ENCODE measurements at regions of chr1 and their contacts with region 1.

Region 1: DNA sequence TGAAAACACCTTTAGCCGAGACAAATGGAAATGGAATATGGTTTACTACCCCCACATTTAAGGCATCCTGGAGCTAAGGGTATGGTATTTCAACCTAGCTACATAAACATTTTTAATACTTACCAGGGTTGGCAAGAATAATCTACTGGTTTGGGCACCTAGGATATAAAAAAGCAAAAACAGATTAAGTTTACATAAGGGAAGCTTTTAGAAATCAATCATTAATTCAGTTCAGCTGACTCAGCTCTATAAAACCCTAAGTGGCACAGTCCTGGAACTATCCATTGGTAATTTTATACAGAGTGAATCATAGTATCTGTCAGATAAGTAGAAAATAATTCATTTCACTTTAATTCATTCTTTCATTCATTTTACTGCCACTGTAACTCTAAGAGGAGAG is 355.2 kb downstream of the VAV3 start:
- DNase-seq: no peak
- H3K4me3 ChIP-seq: no peak overlapping the region
- H3K27ac ChIP-seq: no peak overlapping the region
- H3K4me1 ChIP-seq: peaks cover 4% of the 10 kb centered on the region
- CTCF ChIP-seq: no peak

Region 2: GRCh38 chr1:107100331-107100984 is 509.4 kb before region 1 on chr1:
- CTCF ChIA-PET with region 1: no interaction called
- POLR2A ChIA-PET with region 1: no interaction called
- intact Hi-C with region 1: no loop called
- DNase-seq: no peak
- H3K4me3 ChIP-seq: no peak overlapping the region
- H3K27ac ChIP-seq: no peak overlapping the region
- H3K4me1 ChIP-seq: no peaks in the 10 kb centered on the region
- CTCF ChIP-seq: no peak

Region 3: GRCh38 chr1:107620753-107621152 is 10.9 kb after region 1 on chr1:
- CTCF ChIA-PET with region 1: no interaction called
- POLR2A ChIA-PET with region 1: interaction called, 17 read pairs
- intact Hi-C with region 1: no loop called
- DNase-seq: peak; percentile 70
- H3K4me3 ChIP-seq: peak overlapping the region; percentile 17
- H3K27ac ChIP-seq: peak overlapping the region; percentile 68
- H3K4me1 ChIP-seq: peaks cover 41% of the 10 kb centered on the region
- CTCF ChIP-seq: no peak

Measured in OCI-LY7 (cell line).